ENCODE measurements at regions of chr17 and their contacts with region 1.

Region 1: DNA sequence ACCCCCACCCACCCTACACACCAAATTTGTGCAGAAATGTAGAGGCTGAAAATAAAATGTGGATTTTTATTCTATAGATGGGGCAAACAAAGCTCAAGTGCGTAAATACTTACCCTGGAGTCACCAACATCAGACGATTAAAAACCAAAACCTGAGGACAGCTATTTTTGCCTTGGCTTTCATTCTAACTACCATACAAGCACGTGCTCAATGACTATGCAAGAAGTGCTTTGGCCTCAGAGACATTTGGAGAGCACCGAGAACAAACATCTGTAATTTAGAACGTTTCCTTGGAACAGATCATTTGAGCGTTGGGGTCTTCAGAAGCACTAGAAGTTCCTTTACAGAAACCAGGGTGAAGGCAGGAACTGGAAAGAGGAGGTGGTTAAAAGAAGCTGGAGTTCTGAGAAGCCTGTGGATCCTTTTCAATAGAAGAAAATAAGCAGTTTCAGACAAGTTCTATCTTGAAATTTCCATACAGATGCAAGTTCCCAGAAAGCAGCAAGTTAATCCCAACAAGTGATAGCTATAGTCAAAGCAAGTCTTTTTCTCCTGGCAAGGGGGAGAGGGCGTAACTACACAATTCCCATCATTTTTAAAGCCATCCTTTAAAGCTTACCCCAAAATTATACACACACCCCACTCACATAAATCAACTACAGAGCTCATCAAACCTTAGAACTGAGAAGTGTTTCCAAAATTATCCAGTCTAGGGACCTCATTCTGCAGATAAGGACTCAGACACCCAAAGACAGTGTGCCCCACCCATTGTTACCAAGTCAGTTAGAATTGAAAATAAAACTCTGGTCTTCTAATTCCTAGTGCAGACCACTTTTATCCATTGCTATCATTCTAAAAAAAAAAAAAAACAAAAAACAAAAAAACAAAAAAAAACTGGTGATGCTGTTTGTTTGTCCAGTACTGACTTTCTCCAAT is 29.6 kb upstream of the CDRT4 start:
- DNase-seq: no peak

Region 2: DNA sequence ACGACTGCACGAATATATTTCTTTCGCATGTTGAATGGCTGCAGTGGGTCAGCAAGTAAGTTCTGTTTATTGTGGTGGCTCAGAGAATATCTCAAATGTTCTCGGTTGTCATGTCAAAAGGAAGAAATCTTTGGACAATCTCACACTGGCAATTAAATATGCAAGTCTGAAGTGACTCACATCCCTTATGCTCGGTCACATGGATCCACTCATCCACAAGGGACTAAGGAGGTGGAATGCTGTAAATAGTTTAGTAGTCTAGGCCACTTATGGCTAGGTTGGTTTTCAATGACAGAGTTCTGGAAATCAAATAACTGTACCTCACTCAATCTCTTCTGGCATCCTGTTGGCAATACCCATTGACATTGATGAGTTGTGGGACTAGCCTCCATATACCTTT is 198.8 kb before region 1 on chr17:
- CTCF ChIA-PET with region 1: interaction called, 12 read pairs
- POLR2A ChIA-PET with region 1: no interaction called
- DNase-seq: no peak

Region 3: DNA sequence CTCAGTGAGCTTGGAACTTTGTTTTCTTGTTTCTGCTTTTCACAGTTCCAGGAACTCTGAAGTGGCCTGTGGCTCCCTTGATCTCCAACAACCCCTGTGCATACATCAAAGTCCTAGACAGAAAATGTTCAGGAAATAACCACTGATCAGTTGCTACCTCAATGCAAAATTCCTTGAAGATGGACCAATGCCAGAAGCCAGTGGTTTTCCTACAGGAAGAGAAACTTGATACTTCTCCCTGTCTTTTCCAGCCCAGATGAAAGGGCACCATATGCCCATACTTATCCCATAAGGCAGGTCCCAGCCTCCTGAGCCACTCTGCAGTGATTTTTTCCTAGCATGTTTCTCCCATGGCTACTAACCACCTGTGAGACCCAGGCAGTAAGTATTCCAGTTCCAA is 17.3 kb before region 1 on chr17:
- CTCF ChIA-PET with region 1: no interaction called
- POLR2A ChIA-PET with region 1: no interaction called
- DNase-seq: no peak

Region 4: GRCh38 chr17:15510361-15510760 is 13.4 kb after region 1 on chr17:
- CTCF ChIA-PET with region 1: no interaction called
- POLR2A ChIA-PET with region 1: no interaction called
- DNase-seq: no peak